AG04450 (cell line): ENCODE measurements at regions of chr7 and their contacts with region 1.

Region 1: DNA sequence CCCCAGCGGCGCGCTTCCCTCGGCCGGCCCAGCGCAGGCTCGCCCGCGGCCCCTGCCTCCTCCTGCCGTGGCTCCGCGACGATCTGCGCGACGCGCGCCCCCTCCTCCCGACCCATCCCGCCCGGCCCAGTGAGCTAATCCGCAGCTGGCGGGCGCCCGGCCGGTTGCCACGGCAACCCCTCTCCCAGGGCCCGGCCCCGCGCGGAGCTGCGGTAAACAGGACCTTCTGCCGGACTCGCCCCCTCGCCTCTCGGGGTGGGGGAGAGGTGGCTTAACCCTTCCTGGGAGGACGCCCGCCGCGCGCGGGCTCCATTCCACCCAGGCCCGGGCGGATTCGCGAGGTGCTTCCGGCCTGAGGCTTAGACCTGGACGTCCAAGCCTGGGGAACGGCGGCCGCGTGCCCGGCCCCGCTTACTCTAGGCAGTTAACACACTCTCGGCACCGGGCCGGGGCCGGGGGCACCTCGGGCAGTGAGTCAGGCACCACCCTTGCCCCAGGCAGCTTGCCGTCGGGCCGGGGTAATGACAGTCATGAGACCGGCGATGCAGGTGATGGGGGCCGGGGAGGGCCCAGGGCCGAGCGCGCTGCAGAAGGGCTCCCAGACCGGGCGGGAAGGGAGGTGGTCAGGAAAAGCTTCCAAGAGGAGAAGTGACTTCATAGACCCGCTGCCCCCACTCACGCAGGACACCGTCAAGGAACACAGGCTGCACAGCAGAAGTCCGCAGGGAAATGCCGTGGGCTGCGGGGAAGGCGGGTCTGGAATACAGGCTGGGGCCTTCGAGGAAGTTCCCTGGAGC is at the start of gene DENND2A:
- DNase-seq: peak; percentile 69
- H3K4me3 ChIP-seq: peak within 1 kb of the TSS; percentile 79
- H3K27ac ChIP-seq: peak within 1 kb of the TSS; percentile 91
- H3K27me3 ChIP-seq: no peaks in the 10 kb centered on the region
- CTCF ChIP-seq: no peak
- polyA plus RNA-seq, gene DENND2A: 40.8 and 45.8 TPM in 2 replicates

Region 2: DNA sequence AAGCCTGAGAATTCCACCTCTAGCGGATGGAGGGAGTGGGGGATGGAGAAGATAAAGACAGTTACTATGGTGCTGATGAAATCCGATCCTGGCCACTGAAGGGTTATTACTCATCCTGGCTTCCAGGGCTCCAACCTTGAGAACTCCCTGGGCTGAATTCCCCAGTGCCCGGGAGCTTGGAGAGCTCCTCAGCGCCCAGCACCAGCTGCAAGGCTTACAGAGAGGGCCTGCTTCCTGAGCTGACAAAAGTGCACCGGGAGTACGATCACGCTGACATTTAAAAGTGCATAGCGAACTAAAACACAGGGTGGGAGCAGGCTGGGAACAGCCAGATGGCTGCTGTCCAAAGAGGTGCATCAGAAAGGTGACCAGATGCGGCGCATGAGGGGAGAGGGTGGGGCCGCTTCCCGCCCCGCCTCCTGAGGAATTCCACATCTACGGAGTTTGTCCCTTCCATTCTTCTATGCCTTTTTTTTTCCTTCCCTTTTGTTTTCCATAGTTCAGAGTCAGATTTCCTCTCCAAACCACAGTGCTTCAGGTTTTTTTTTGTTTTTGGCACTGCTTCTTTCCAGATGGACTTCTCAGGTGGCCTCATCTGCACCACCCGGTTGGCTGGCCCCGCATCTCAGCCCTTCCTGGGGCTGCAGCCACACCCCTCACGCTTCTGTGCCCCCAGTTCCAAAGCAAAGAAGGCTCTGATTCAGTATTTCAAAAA is 99.3 kb before region 1 on chr7:
- CTCF ChIA-PET with region 1: interaction called, 11 read pairs
- POLR2A ChIA-PET with region 1: interaction called, 4 read pairs
- DNase-seq: peak; percentile 82
- H3K4me3 ChIP-seq: peak overlapping the region; percentile 29
- H3K27ac ChIP-seq: peak overlapping the region; percentile 91
- H3K27me3 ChIP-seq: no peaks in the 10 kb centered on the region
- CTCF ChIP-seq: no peak

Region 3: DNA sequence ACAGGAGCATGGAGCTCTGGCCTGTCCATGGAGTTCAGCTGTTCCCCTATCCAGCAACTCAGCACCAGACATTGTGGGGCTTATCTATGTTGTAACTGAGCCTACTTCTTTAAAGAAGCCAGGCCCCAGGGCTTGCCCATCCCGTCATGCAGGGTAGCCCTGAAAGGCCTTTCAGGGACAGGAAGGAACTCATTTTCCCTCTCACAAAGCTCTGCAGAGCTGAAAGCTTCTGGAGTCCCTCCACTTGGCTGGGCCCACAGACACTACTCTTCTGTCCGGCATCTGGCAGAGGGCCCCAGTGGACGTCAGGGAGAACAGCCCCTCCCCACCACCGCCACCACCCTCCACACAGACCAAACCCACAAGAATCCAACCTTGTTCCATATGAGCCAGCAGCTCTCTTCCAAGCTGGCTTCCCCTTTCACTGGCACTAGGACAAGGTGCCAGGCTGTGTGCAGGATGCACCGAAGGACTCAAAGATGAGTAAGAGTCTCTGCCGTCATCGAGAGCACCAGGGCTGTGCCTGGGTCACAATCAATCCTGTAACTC is 33.4 kb before region 1 on chr7:
- CTCF ChIA-PET with region 1: interaction called, 4 read pairs
- POLR2A ChIA-PET with region 1: interaction called, 21 read pairs
- DNase-seq: no peak
- H3K4me3 ChIP-seq: no peak overlapping the region
- H3K27ac ChIP-seq: peak overlapping the region; percentile 100
- H3K27me3 ChIP-seq: no peaks in the 10 kb centered on the region
- CTCF ChIP-seq: no peak

Region 4: DNA sequence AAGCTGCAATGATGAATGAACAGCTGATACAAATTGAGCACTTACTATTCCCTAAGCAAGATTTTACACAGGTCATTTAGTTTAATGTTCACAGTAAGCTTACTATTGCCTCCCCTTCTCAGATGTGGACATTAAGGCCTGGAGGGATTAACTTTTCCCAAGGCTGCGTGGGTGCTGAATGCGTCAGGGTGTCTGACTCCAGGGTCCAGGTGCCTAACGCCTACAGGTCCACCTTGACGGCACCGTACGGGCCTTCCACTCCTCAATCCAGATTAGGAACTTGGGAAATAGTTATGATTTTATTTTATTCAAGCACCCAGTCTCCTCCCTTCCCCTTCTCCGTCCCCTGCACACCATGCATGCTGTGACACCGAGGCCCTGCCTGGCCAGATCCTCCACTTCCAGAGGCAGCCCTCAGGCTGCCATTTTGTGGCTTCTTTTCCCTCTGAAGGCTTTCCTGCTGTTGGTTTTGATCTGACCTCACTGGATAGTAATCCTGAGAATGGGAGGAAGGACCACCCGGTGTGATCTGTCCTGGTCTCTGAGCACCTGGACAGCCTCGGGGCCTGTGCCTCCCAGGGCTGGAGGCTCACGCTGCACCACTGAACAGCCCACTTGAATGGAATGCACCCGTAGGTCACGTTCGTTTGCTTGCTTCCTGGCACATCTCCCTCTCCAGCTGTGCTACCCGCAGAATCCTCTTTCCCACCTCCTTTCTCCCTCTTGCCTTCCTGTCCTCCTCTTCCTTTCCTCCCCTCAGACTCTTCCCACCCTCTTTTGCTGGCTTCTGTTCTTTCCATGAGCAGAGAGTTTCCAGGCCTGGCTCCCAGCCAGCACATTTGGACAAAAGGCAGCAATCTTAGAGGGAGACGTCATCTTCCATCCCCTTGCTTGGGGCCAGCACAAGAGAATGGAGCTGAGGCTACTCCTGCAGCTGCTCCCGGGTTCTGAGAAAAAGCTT is 14.7 kb before region 1 on chr7:
- CTCF ChIA-PET with region 1: interaction called, 4 read pairs
- POLR2A ChIA-PET with region 1: interaction called, 18 read pairs
- DNase-seq: peak; percentile 99
- H3K4me3 ChIP-seq: no peak overlapping the region
- H3K27ac ChIP-seq: peak overlapping the region; percentile 100
- H3K27me3 ChIP-seq: no peaks in the 10 kb centered on the region
- CTCF ChIP-seq: no peak

Region 5: DNA sequence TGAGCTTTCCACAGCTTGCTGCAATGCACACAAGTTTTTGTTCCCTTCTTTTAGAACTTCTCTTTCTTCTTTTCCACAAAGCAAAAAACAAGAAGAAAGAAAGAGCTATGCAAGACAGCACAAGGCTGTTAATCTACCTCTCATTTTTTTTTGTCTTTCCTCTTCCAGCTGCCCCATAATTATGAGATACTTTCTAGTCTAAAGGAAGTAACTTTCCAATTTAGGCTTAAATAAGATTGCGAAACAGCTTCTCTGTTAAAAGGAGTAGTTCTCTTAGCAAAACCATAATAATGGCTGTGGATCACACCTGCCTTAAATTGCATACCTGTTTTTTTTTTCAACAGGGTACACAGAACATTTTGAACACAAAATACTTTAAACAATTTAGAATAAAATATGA is 111.6 kb after region 1 on chr7:
- CTCF ChIA-PET with region 1: no interaction called
- POLR2A ChIA-PET with region 1: no interaction called
- DNase-seq: no peak
- H3K4me3 ChIP-seq: no peak overlapping the region
- H3K27ac ChIP-seq: no peak overlapping the region
- H3K27me3 ChIP-seq: no peaks in the 10 kb centered on the region
- CTCF ChIP-seq: no peak

Region 6: GRCh38 chr7:140898786-140899536 is 258.0 kb after region 1 on chr7:
- CTCF ChIA-PET with region 1: no interaction called
- POLR2A ChIA-PET with region 1: no interaction called
- DNase-seq: no peak
- H3K4me3 ChIP-seq: no peak overlapping the region
- H3K27ac ChIP-seq: no peak overlapping the region
- H3K27me3 ChIP-seq: no peaks in the 10 kb centered on the region
- CTCF ChIP-seq: no peak